H1 (cell line): ENCODE measurements at regions of chr2 and their contacts with region 1.

Region 1: DNA sequence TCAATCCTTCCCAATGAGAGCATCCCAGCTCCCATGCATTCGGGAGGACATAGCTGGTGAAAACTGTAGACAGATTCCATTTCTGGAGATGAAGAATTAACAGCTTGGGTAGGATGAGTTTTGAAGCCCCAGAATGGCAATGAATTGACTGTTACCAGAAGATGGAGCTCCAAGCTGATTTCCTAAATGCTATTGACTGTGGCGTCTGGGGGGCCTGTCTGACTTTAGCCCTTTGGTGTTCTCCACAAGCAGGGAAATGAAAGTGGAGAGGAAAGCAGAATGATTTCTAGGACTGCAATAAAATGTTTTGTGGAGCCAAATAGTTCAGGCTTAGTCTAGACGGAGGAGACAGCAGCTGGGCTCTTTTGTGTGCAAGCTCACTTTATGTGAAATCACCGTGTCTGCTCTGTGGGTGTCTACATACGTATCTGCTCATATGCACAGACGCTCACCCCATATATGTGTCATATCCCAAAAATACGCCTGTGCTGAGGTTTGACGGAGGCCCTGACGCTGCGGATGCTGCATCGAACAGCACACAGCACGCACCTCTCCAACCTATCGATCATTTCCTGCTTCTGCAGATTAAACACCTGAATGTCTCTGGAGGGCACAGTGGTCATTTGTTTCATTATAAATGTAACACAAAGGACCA is 166.4 kb upstream of the PXDN start:
- DNase-seq: no peak
- H3K4me3 ChIP-seq: no peak overlapping the region
- H3K27ac ChIP-seq: no peak overlapping the region
- H3K4me1 ChIP-seq: no peaks in the 10 kb centered on the region
- H3K27me3 ChIP-seq: no peaks in the 10 kb centered on the region
- CTCF ChIP-seq: peak in 2 of 3 experiments; percentile 39 to 54; a peak in 3 of 4 replicates
- EP300 ChIP-seq: no peak
- POLR2A ChIP-seq: no peak
- RAD21 ChIP-seq: peak; percentile 72 to 81

Region 2: GRCh38 chr2:1823187-1824169 is 87.2 kb before region 1 on chr2:
- CTCF ChIA-PET with region 1: no interaction called
- POLR2A ChIA-PET with region 1: no interaction called
- DNase-seq: peak; percentile 39 to 80
- H3K4me3 ChIP-seq: peak overlapping the region in 2 of 4 experiments; percentile 8 to 24; a peak in 2 of 8 replicates
- H3K27ac ChIP-seq: no peak overlapping the region
- H3K4me1 ChIP-seq: peaks cover 0 to 9% (median 6%) of the 10 kb centered on the region in 4 experiments; a peak in 5 of 7 replicates
- H3K27me3 ChIP-seq: no peaks in the 10 kb centered on the region
- CTCF ChIP-seq: peak; percentile 24 to 56 (median 50)
- EP300 ChIP-seq: no peak
- POLR2A ChIP-seq: no peak
- RAD21 ChIP-seq: peak; percentile 50 to 59

Region 3: DNA sequence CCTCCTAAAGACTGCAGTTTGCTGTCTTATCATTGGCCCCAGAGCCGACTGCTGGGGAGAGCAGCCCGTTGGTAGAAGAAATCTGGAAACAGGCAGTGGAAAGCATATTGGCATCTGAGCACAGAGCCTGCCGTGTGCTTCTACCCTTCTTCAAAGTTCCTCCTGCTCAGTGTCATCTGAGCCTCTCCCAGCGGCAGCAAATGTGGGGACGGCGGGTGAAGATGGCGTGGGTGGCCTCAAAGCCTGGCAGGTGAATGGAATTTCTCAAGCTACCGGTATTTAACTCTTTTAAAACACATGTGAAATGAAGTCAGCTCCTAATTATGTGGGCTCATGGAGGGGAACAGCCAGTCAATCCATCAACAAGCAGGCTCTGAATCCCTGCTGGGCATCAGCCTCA is 15.2 kb after region 1 on chr2:
- CTCF ChIA-PET with region 1: interaction called, 11 read pairs
- POLR2A ChIA-PET with region 1: no interaction called
- DNase-seq: no peak
- H3K4me3 ChIP-seq: no peak overlapping the region
- H3K27ac ChIP-seq: no peak overlapping the region
- H3K4me1 ChIP-seq: no peaks in the 10 kb centered on the region
- H3K27me3 ChIP-seq: no peaks in the 10 kb centered on the region; a peak in 2 of 7 replicates
- CTCF ChIP-seq: no peak
- EP300 ChIP-seq: no peak
- POLR2A ChIP-seq: no peak
- RAD21 ChIP-seq: no peak

Region 4: DNA sequence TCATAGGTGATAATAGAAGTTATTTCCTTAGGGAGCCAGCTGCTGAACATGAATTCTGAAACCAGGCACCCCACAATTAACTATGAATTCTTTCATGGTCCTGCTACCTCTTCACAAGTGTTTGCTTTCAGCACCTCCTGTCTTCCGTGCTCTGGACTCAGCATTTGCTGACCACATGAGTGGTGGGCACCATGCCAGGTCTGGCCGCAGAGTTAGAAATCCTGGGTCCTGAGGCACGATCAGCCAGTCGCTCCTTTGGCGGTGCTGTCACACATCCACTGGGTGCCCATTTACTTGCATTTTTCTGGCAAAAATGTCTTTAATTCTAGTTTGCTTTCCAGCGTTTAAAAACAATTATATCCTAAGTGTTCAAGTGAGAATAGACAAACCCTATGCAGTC is 30.0 kb after region 1 on chr2:
- CTCF ChIA-PET with region 1: no interaction called
- POLR2A ChIA-PET with region 1: no interaction called
- DNase-seq: no peak
- H3K4me3 ChIP-seq: no peak overlapping the region
- H3K27ac ChIP-seq: no peak overlapping the region
- H3K4me1 ChIP-seq: peaks cover 0 to 5% (median 2%) of the 10 kb centered on the region in 4 experiments; a peak in 2 of 7 replicates
- H3K27me3 ChIP-seq: no peaks in the 10 kb centered on the region
- CTCF ChIP-seq: no peak
- EP300 ChIP-seq: no peak
- POLR2A ChIP-seq: no peak
- RAD21 ChIP-seq: no peak

Region 5: DNA sequence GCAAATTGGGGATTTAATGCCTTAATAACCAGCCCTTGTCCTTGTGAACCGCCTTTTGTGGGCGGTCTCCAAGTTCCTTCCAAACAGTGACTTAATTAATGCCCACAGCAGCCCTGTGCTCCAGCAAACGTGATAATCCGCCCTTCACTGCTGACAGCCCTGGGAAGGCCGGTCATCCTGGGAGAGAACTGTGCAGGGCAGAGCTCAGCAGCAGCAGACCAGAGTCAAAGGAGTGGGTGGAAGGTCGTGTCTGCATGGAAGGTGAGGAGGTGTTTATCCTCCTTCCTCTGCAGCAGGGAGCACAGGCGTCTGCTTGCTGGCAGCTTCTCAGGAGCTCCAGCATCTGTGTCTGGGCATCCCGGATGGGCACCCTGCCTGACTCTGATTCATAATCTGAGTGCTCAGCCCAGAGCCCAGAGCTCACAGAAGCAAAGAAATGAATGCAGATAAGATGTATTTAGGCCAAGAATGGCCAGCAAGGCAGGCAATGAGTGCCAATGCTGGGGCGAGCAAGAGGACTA is 103.6 kb after region 1 on chr2:
- CTCF ChIA-PET with region 1: no interaction called
- POLR2A ChIA-PET with region 1: no interaction called
- DNase-seq: no peak
- H3K4me3 ChIP-seq: no peak overlapping the region
- H3K27ac ChIP-seq: no peak overlapping the region
- H3K4me1 ChIP-seq: peaks cover 0 to 13% (median 7%) of the 10 kb centered on the region in 4 experiments
- H3K27me3 ChIP-seq: peaks cover 0 to 3% (median 0%) of the 10 kb centered on the region in 4 experiments; a peak in 1 of 7 replicates
- CTCF ChIP-seq: no peak
- EP300 ChIP-seq: no peak
- POLR2A ChIP-seq: no peak
- RAD21 ChIP-seq: no peak